ENCODE measurements at regions of chr19 and their contacts with region 1.

Region 1: GRCh38 chr19:12757544-12758274 is 6.1 kb downstream of the BEST2 start:
- DNase-seq: peak; percentile 83
- ATAC-seq: peak; percentile 84
- H3K4me3 Mint-ChIP-seq: peak overlapping the region; percentile 19
- H3K27ac Mint-ChIP-seq: no peak overlapping the region
- H3K4me1 Mint-ChIP-seq: peaks cover 6% of the 10 kb centered on the region
- H3K27me3 Mint-ChIP-seq: peaks cover 20% of the 10 kb centered on the region

Region 2: GRCh38 chr19:12716861-12717260 is 40.8 kb before region 1 on chr19:
- CTCF ChIA-PET with region 1: interaction called, 12 read pairs
- POLR2A ChIA-PET with region 1: no interaction called
- intact Hi-C with region 1: loop called (anchors 1 to 5 kb)
- DNase-seq: peak; percentile 55
- ATAC-seq: peak; percentile 73
- H3K4me3 Mint-ChIP-seq: no peak overlapping the region
- H3K27ac Mint-ChIP-seq: no peak overlapping the region
- H3K4me1 Mint-ChIP-seq: peaks cover 28% of the 10 kb centered on the region
- H3K27me3 Mint-ChIP-seq: no peaks in the 10 kb centered on the region

Measured in activated CD4-positive, alpha-beta T cell treated with anti-CD3 and anti-CD28 coated beads for 36 hours (primary cell).